A673 (cell line): ENCODE measurements at regions of chr10 and their contacts with region 1.

Region 1: DNA sequence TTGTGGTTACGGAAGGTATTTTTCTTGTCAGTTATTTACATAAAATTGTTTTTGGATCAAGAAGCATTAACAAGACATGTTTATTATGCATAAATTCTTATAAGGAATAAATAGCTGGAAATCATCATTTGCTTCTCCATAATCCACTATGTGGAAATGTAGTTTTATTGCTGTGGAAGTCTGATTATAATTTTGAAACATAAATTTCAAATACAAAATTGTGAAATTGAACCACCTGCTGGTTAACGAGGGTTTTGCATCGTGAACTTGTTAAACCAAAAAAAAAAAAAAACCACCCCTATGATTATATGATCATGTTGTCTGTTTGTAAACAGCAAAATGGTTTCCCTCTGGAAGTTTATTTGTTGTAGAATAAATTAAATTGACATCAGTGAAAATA is 25.9 kb downstream of the ABRAXAS2 start:
- DNase-seq: peak; percentile 25
- H3K4me3 ChIP-seq: no peak overlapping the region
- H3K27ac ChIP-seq: no peak overlapping the region
- H3K4me1 ChIP-seq: no peaks in the 10 kb centered on the region
- H3K27me3 ChIP-seq: no peaks in the 10 kb centered on the region
- CTCF ChIP-seq: peak; percentile 61

Region 2: DNA sequence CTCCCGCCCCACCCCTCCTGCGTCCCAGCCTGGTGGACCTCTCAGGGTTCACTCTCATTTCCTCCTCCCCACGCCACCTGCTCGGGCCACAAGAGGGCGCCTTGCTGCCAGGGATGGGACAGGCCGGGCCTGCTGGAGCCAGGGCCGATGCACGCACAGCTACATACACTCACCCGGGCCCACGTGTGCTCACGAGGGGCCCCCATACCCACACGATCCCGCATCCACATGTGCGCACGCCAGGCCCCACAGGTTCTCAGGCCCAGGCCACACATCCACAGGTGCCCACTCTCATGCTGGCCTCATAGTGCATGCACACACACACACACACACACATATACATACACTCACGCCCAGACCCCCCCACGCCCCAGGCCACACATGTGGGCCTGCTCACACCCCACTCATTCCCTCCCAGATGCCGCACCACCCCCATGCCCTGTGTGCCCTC is 297.2 kb before region 1 on chr10:
- CTCF ChIA-PET with region 1: interaction called, 3 read pairs
- POLR2A ChIA-PET with region 1: interaction called, 4 read pairs
- intact Hi-C with region 1: loop called (anchors 5 kb)
- DNase-seq: peak; percentile 88
- H3K4me3 ChIP-seq: no peak overlapping the region
- H3K27ac ChIP-seq: no peak overlapping the region
- H3K4me1 ChIP-seq: no peaks in the 10 kb centered on the region
- H3K27me3 ChIP-seq: no peaks in the 10 kb centered on the region
- CTCF ChIP-seq: peak; percentile 93